PC-3 (cell line): ENCODE measurements at regions of chr20 and their contacts with region 1.

Region 1: DNA sequence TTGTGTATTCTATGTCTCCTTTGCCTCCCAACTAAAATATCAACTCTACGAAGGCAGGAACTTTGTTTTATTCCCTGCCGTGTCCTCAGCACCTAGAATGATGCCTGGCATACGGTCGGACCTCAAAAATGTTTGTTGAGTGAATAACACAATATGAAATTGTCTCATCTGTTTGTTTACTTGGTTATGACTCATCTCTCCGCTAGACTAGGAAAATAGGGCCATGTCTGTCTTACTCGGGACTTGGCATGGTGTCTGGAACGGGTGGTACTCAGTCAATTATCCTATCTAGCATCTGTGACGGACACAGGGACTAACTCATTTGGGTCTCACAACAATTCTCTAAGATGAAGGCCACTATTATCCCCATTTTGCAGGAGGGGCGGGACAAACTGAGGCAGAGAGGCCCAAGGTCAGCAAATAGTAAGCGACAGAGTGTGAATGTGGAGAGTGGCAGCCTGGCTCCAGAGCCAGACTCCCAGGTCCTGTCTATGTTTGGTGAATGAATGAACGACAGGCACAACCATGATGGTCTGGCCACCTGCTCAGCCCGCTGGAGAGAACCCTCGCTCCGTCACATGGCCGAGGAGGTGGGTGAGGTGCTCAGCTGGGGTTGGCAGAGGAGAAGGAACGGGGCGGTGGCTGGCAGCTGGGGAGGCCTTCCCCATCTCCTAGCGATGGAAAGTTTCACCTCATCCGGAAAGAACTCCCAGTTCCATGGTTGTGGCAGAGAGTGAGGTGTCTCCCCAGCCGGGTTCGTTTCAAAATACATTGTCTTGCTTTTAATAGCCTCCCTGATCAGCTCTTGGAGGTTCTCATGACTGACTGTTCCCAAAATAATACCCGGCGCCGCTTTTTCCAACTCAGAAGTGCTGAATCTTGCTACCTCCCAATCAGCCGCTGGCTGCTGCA is 27.6 kb upstream of the NFATC2 start:
- DNase-seq: peak; percentile 98
- ATAC-seq: peak; percentile 75
- H3K4me3 ChIP-seq: no peak overlapping the region
- H3K27ac ChIP-seq: no peak overlapping the region
- H3K4me1 ChIP-seq: peaks cover 25% of the 10 kb centered on the region
- H3K27me3 ChIP-seq: no peaks in the 10 kb centered on the region
- CTCF ChIP-seq: no peak

Region 2: DNA sequence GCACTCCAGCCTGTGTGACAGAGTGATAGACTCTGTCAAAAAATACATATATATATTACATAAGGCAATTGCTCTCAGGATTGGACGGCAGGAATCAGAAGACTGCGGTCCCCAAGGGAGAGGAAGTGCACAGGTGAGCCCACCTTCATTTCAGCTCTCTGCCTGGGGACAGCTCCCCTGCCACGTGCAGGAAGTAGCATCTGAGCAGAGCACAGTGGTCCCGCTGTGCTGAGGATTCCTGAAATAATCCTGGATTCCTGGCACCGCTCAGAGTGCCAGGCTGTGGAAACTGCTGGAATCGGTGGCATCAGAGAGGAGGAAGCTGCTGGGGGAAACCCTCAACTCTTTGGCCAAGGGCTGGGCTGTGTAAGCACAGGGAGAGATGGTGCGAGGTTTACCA is 55.2 kb before region 1 on chr20:
- CTCF ChIA-PET with region 1: interaction called, 10 read pairs
- POLR2A ChIA-PET with region 1: no interaction called
- intact Hi-C with region 1: no loop called
- DNase-seq: no peak
- ATAC-seq: no peak
- H3K4me3 ChIP-seq: no peak overlapping the region
- H3K27ac ChIP-seq: no peak overlapping the region
- H3K4me1 ChIP-seq: no peaks in the 10 kb centered on the region
- H3K27me3 ChIP-seq: no peaks in the 10 kb centered on the region
- CTCF ChIP-seq: no peak